ENCODE measurements at regions of chr2 and their contacts with region 1.

Region 1: DNA sequence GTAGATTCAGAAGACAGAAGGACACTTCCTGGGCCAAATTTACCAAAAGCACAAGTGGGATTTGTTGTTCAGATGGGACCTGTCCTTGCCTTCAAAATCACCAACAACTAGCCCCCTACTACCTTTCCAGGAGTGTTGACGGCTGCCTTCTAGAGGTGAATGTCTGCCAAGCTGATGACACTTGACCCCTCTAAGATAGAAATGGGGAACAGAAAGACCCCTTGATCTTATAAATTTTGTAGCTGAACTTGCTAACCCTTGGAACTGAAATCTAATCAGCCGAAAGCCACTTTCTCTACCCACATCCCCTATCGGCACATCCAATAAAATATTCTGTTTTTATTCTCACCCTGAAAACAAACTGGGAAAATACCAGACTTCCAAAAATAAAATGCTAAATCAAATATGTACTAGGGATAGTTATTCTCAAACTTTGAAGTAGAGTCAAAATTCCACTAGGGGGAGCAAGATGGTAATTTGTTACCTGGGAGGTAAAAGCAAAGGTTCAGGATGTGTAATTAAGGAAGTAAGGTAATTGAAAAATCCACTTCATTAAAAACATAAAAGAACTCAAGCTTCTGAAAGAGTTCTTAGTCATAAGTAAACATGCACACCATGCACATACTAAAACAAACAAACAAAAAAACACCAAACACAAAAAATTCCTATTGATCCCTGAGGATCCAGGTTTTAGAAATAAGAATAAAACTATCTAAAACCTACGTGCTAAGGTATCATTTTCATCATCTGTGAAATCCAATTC is 119.2 kb downstream of the ANKRD44 start:
- DNase-seq: no peak
- H3K4me3 ChIP-seq: no peak overlapping the region
- CTCF ChIP-seq: peak; percentile 40

Region 2: GRCh38 chr2:197168705-197169104 is 22.7 kb before region 1 on chr2:
- CTCF ChIA-PET with region 1: interaction called, 13 read pairs
- POLR2A ChIA-PET with region 1: no interaction called
- DNase-seq: no peak
- H3K4me3 ChIP-seq: no peak overlapping the region
- CTCF ChIP-seq: peak; percentile 59

Region 3: DNA sequence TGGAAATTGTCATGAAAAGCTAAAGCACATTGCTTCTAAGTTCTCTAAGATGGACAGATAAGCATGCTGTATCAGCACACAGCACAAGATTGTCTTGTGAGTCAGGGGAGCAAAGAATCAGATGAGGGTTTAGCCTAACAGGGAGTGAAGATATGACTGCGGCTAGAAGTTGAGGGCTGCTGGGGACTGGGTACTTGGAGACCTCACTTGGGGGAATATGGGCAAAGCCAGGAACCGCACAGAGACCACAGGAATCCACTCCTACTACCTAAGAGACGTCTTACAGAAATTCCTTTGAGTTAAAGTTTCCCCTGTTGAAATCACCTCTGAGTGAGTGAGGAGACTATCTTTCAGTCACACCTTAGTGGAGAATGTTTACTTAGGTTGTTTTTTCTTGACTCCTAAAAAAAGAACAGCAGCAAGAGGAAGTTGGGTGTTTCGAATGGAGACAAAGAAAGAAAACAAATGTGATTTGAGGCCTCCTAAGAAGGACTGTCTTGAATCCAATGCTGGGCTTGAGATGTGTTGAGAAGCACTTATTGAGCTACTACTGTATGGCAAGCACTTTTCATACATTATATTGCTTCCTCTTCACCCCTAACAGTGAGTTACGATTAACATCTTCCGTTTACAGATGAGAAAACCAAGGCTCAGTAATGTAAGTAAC is 18.5 kb after region 1 on chr2:
- CTCF ChIA-PET with region 1: interaction called, 53 read pairs
- POLR2A ChIA-PET with region 1: no interaction called
- DNase-seq: no peak
- H3K4me3 ChIP-seq: no peak overlapping the region
- CTCF ChIP-seq: no peak

Region 4: GRCh38 chr2:197310271-197310985 is 119.1 kb after region 1 on chr2 and contains the start of gene ANKRD44:
- CTCF ChIA-PET with region 1: interaction called, 17 read pairs
- POLR2A ChIA-PET with region 1: no interaction called
- DNase-seq: no peak
- H3K4me3 ChIP-seq: peak within 1 kb of the TSS; percentile 77
- CTCF ChIP-seq: no peak

Region 5: GRCh38 chr2:197339496-197340220 is 148.3 kb after region 1 on chr2:
- CTCF ChIA-PET with region 1: no interaction called
- POLR2A ChIA-PET with region 1: no interaction called
- DNase-seq: no peak
- H3K4me3 ChIP-seq: no peak overlapping the region
- CTCF ChIP-seq: no peak

Region 6: DNA sequence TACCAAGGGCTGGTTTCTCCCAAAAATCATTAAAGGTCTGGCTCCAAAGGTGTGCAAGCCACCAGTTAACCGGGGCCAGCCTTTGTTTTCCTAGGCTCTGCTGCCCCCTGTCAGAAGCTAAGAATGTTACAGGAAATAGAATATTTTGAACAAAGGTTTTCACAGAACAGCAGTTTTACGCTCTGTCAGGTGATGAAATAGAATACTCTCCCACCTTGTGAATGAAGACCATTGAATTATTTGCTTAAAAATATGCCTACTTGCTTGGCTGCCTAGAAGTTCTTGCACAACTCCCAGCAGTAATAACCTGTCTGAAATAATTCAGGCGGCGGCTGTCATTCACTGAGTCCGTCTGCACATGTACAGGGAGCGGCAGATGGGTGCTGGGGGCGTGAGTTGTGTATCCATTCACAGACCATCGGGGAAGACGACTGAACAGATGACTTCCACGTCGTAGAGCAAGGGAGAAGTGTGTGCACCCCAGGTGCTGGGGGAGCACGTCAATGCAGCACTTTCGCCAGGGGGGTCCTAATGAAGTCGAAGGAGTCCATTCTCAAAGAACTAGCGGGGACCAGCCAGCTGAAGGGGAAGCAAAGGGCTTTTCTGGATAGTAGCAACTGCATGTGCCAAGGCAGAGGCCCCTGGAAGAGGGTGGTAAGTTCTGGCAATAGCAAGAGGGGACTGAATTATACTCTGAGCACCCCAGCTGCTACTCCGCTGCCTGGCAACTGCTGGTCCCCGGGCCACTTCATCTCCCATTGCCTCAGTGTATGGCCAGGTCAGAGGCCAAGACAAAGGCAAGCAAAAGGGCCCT is 187.3 kb after region 1 on chr2:
- CTCF ChIA-PET with region 1: interaction called, 25 read pairs
- POLR2A ChIA-PET with region 1: no interaction called
- DNase-seq: no peak
- H3K4me3 ChIP-seq: peak overlapping the region; percentile 33; the same call in 1 of the 2 replicates
- CTCF ChIP-seq: peak; percentile 65

Measured in AG04449 (cell line).